Activated CD4-positive, alpha-beta T cell treated with anti-CD3 and anti-CD28 coated beads, Interleukin-2, amount 10 ng/mL, durations not matched to agents 24 days and 14 days (primary cell): ENCODE measurements at regions of chr14 and their contacts with region 1.

Region 1: DNA sequence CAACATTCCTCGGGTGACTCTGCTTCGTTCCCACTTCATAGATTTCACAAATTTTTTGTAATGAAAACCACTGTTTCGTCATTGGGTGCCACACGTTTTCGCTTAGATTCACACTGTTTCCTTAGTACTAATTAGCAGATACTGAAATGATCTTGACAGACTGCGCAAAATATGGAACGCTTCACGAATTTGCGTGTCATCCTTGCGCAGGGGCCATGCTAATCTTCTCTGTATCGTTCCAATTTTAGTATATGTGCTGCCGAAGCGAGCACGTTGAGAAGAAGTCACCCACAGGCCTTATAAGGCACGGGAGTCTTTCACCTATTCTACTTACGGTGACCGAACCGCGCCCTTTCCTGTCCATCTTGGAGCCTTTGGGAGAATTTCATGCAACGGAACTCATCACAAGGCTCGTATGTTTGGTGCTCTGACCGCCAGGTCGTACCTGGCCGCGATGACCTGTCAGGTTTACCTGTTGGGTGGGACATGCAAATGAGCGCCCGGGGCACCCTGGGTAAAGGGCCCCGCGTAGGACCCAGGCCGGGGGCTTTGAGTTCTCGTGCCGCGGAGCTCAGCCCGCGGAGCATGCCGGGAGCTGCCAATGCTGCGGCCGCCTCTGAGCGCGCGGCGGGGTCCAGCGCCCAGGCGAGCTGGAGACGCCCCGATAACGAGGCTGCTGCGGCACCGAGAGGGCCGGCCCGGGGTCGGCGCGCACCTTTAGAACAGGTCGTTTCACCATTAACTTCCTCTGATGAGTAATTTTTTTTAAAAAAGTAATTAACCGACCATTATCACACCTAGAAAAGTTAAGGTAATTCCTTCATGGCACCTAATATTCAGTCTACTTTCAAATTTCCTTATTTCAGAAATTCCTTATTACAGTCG is at the start of gene RNU6-8:
- DNase-seq: peak; percentile 95
- H3K4me3 Mint-ChIP-seq: peak within 1 kb of the TSS; percentile 87
- H3K27ac Mint-ChIP-seq: peak within 1 kb of the TSS; percentile 94
- H3K4me1 Mint-ChIP-seq: peaks cover 36% of the 10 kb centered on the region
- H3K27me3 Mint-ChIP-seq: peaks cover 24% of the 10 kb centered on the region
- total RNA-seq, gene RNU6-8: not detected in 2 replicates

Region 2: GRCh38 chr14:30558675-30559555 is 1644.3 kb before region 1 on chr14 and contains the start of gene G2E3:
- intact Hi-C with region 1: loop called (anchors 10 kb)
- DNase-seq: peak; percentile 98
- H3K4me3 Mint-ChIP-seq: peak within 1 kb of the TSS; percentile 99
- H3K27ac Mint-ChIP-seq: peak within 1 kb of the TSS; percentile 100
- H3K4me1 Mint-ChIP-seq: peaks cover 22% of the 10 kb centered on the region
- H3K27me3 Mint-ChIP-seq: peaks cover 2% of the 10 kb centered on the region
- total RNA-seq, gene G2E3: 22.4 and 23.8 TPM in 2 replicates

Region 3: GRCh38 chr14:31456841-31457664 is 746.2 kb before region 1 on chr14 and contains the start of gene DTD2:
- intact Hi-C with region 1: loop called (anchors 1 kb)
- DNase-seq: peak; percentile 97
- H3K4me3 Mint-ChIP-seq: peak within 1 kb of the TSS; percentile 95
- H3K27ac Mint-ChIP-seq: peak within 1 kb of the TSS; percentile 98
- H3K4me1 Mint-ChIP-seq: peaks cover 24% of the 10 kb centered on the region
- H3K27me3 Mint-ChIP-seq: peaks cover 4% of the 10 kb centered on the region
- total RNA-seq, gene DTD2: 30.8 and 32.2 TPM in 2 replicates

Region 4: DNA sequence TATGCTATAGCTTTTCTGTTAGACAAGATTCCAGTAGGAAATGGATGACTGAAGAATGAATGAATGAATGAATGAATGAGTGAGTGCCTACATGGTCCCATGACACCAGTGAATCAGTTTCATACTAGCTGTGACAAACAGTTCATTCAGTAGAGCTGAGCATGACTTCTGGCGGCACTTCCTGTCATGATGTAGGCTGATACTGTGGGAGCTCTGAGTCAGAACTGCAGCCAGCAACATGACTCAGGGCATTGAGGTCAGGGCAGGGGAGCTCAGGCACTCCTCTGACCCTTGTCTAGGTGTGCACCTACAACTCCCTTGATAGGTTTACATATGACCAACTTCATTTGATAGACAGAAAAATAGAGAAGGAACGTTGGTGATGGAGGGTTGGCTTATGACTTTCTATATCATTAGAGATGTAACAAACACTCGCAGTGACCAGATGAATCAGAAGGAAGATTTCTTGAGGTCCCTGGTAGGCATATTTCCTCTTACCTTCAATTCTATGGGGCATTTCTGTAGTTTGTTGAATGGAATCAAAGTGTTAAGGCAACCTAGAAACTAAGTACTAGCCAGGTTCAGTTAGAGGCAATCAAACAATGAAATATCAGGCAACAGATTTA is 265.4 kb before region 1 on chr14:
- intact Hi-C with region 1: loop called (anchors 5 kb)
- DNase-seq: peak; percentile 88
- H3K4me3 Mint-ChIP-seq: no peak overlapping the region
- H3K27ac Mint-ChIP-seq: peak overlapping the region; percentile 76
- H3K4me1 Mint-ChIP-seq: peaks cover 11% of the 10 kb centered on the region
- H3K27me3 Mint-ChIP-seq: peaks cover 4% of the 10 kb centered on the region

Region 5: DNA sequence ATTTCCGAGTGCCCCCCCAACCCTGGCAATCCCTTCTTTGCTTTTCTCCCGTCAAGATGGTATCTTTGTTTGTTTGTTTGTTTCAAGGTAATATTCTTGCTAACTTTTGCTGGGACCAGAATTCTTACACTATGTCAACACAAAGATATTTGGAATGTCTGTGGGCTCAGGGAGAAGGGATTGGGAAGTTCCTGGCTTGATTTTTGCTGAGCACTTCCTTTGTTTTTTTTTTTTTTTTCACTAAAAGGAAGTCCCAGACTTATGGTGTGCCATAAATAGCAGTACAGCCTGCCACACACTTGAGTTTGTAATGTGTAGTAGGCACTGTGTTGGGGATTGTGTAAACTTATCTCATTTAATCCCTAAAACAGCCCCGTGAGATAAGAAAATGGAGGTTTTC is 12.6 kb before region 1 on chr14:
- intact Hi-C with region 1: no loop called
- DNase-seq: no peak
- H3K4me3 Mint-ChIP-seq: no peak overlapping the region
- H3K27ac Mint-ChIP-seq: no peak overlapping the region
- H3K4me1 Mint-ChIP-seq: peaks cover 6% of the 10 kb centered on the region
- H3K27me3 Mint-ChIP-seq: peaks cover 2% of the 10 kb centered on the region

Region 6: DNA sequence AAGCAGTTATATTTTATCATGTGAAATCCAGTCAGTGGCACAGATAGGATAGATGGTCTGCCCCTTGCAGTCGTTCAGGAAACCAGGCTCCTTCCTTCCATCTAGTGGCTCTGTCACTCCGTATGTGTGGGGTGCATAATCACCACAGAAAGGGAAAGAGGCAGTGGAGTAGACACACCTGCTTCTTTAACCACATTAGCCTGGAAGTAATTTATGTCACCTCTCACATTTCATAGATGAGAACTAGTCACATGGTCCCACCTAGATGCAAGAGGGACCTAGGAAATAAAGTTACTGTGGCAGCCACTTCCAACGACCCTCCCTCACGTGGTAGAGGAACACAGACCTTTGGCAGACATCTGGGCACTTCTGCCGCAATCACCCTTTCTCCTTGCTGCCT is 14.1 kb after region 1 on chr14:
- intact Hi-C with region 1: no loop called
- DNase-seq: no peak
- H3K4me3 Mint-ChIP-seq: no peak overlapping the region
- H3K27ac Mint-ChIP-seq: no peak overlapping the region
- H3K4me1 Mint-ChIP-seq: no peaks in the 10 kb centered on the region
- H3K27me3 Mint-ChIP-seq: peaks cover 4% of the 10 kb centered on the region

Region 7: GRCh38 chr14:32252030-32252670 is 48.9 kb after region 1 on chr14:
- intact Hi-C with region 1: loop called (anchors 2 kb)
- DNase-seq: peak; percentile 87
- H3K4me3 Mint-ChIP-seq: no peak overlapping the region
- H3K27ac Mint-ChIP-seq: no peak overlapping the region
- H3K4me1 Mint-ChIP-seq: no peaks in the 10 kb centered on the region
- H3K27me3 Mint-ChIP-seq: no peaks in the 10 kb centered on the region